Panc1 (cell line): ENCODE measurements at regions of chr15 and their contacts with region 1.

Region 1: DNA sequence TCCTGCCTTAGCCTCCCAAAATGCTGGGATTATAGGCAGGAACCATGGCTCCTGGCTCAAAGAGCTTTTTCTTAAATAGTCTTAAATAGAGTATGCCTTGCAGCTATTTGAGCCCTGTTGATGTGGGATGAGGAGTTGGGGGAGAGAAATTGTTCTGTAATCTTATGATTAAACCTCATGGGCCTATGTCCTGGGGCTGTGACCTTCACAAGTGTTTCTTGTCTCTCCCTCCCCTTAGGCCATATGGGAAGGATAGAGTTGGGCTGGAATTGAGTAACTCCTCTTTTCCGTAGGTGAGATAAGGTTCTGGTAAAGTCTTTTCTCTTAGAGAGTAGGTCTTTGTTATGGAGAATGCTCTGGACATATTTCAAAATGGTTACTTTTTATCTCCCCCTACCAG is 114.3 kb downstream of the ARNT2 start:
- DNase-seq: no peak
- ATAC-seq: no peak
- H3K4me3 ChIP-seq: no peak overlapping the region
- H3K27ac ChIP-seq: no peak overlapping the region
- H3K4me1 ChIP-seq: no peaks in the 10 kb centered on the region
- H3K27me3 ChIP-seq: no peaks in the 10 kb centered on the region
- CTCF ChIP-seq: no peak

Region 2: DNA sequence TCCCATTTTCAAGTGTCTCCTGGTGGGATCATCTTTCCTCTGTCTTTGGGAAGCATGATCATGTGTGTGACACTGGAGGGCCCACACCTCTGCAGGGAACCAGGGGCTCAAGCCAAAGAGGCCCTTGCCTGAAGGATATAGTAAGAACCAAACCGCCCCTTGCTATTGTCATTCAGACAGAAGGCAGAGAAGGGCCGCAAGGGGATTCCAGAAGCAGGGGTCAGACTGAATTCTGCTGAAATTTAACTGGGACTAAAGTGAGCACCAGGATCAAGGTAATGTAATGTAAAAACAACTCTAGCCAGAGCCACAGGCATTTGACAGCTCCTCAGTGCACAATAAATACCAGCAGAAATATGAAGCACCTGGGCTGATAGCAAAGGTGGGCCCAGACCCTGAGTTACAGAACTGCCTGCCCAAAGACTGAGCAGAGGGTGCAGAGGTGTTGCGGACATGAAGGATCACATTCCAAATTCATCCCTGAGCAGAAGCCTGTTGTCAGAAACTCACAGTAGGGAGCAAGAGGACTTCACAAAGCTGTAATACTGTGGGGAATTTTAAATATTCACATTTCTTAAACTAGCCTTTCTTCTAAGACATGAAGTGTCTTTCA is 1382.0 kb before region 1 on chr15:
- CTCF ChIA-PET with region 1: no interaction called
- POLR2A ChIA-PET with region 1: interaction called, 11 read pairs
- in situ Hi-C with region 1: no loop called
- intact Hi-C with region 1: no loop called
- DNase-seq: no peak
- ATAC-seq: no peak
- H3K4me3 ChIP-seq: no peak overlapping the region
- H3K27ac ChIP-seq: no peak overlapping the region
- H3K4me1 ChIP-seq: no peaks in the 10 kb centered on the region
- H3K27me3 ChIP-seq: peaks cover 10% of the 10 kb centered on the region
- CTCF ChIP-seq: no peak

Region 3: GRCh38 chr15:80251428-80252120 is 266.9 kb before region 1 on chr15:
- CTCF ChIA-PET with region 1: no interaction called
- POLR2A ChIA-PET with region 1: no interaction called
- in situ Hi-C with region 1: no loop called
- intact Hi-C with region 1: no loop called
- DNase-seq: no peak
- ATAC-seq: peak; percentile 80
- H3K4me3 ChIP-seq: peak overlapping the region; percentile 32 to 42
- H3K27ac ChIP-seq: no peak overlapping the region
- H3K4me1 ChIP-seq: peaks cover 5% of the 10 kb centered on the region
- H3K27me3 ChIP-seq: peaks cover 58% of the 10 kb centered on the region
- CTCF ChIP-seq: no peak